ENCODE measurements at regions of chrX and their contacts with region 1.

Region 1: GRCh38 chrX:1649621-1650020 is 34.8 kb downstream of the ASMT start:
- DNase-seq: no peak
- ATAC-seq: no peak

Region 2: GRCh38 chrX:1700757-1701156 is 51.1 kb after region 1 on chrX:
- intact Hi-C with region 1: no loop called
- DNase-seq: no peak
- ATAC-seq: no peak

Region 3: GRCh38 chrX:2596050-2596449 is 946.4 kb after region 1 on chrX:
- intact Hi-C with region 1: loop called (anchors 2 kb)
- DNase-seq: no peak
- ATAC-seq: no peak

Region 4: GRCh38 chrX:2627272-2627867 is 977.7 kb after region 1 on chrX:
- intact Hi-C with region 1: loop called (anchors 5 kb)
- DNase-seq: no peak
- ATAC-seq: no peak

Measured in Right ventricle myocardium inferior (tissue), 1 donor.